Common myeloid progenitor, CD34-positive (primary cell): ENCODE measurements at regions of chr1 and their contacts with region 1.

Region 1: DNA sequence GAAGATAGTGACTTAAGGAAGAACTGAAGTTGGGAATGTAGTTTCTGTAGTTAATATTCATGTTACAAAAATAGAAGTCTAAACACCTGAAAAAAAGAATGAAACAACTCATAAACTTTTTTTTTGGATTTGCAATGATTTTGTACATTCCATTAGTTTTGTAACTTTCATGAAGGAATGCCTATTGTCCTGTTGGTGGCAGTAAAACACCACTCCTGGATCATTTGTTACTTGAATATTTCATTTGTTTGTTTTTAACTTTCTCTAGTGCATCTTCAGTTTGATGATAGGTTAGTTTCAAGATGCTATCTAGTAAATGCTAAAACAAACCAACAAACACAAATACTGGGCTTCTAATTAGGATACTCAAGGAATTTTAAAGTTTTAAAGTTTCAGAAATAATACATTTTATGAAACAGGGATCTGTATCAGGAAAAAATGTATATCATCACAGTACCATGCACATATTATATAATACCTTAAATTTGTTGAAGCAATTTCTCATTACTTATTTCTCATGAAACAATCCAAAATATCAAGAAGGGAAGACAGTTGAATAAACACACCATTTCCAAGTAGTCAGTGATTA is 229.7 kb upstream of the CACYBP start:
- DNase-seq: peak; percentile 58 to 82 (median 80)
- H3K4me3 ChIP-seq: no peak overlapping the region
- H3K27ac ChIP-seq: no peak overlapping the region
- H3K4me1 ChIP-seq: peaks cover 0 to 6% (median 0%) of the 10 kb centered on the region in 4 experiments
- H3K27me3 ChIP-seq: no peaks in the 10 kb centered on the region

Region 2: GRCh38 chr1:174982971-174983689 is 213.1 kb after region 1 on chr1:
- CTCF ChIA-PET with region 1: interaction called, 23 read pairs
- POLR2A ChIA-PET with region 1: no interaction called
- DNase-seq: peak; percentile 71 to 83 (median 77)
- H3K4me3 ChIP-seq: no peak overlapping the region
- H3K27ac ChIP-seq: no peak overlapping the region
- H3K4me1 ChIP-seq: peaks cover 0 to 4% (median 0%) of the 10 kb centered on the region in 4 experiments
- H3K27me3 ChIP-seq: no peaks in the 10 kb centered on the region